Heart right ventricle (tissue), 16 donors: ENCODE measurements at regions of chr19 and their contacts with region 1.

Region 1: DNA sequence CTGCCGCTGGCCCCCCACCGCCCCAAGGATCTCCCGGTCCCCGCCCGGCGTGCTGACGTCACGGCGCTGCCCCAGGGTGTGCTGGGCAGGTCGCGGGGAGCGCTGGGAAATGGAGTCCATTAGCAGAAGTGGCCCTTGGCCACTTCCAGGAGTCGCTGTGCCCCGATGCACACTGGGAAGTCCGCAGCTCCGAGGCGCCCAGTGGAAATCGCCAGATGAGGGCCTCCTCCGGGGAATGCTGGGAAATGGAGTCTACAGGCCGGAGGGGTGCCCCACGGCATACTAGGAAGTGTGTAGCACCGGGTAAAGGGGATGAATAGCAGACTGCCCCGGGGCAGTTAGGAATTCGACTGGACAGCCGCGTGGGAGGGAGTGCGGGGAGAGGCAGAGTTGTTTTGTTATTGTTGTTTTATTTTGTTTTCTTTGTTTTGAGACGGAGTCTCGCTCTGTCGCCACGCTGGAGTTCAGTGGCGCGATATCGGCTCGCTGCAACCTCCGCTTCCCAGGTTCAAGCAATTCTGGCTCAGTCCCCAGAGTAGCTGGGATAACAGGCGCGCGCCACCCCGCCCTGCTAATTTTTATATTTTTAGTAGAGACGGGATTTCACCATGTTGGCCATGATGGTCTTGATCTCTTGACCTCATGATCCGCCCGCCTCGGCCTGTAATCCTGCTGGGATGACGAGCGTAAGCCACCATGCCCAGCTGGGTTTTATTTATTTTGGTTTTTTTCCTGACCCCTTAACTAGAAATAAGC is at the start of gene PPP1R12C:
- DNase-seq: peak; percentile 99
- ATAC-seq: peak; percentile 81 to 91 (median 87)
- H3K4me3 ChIP-seq: peak within 1 kb of the TSS; percentile 69 to 100 (median 89)
- H3K27ac ChIP-seq: peak within 1 kb of the TSS; percentile 86 to 99 (median 96)
- H3K4me1 ChIP-seq: peaks cover 23 to 48% (median 42%) of the 10 kb centered on the region in 9 donors
- H3K27me3 ChIP-seq: no peaks in the 10 kb centered on the region
- CTCF ChIP-seq: peak in 1 of 9 donors; percentile 15
- total RNA-seq, gene PPP1R12C: 134 to 242 (median 193) TPM

Region 2: DNA sequence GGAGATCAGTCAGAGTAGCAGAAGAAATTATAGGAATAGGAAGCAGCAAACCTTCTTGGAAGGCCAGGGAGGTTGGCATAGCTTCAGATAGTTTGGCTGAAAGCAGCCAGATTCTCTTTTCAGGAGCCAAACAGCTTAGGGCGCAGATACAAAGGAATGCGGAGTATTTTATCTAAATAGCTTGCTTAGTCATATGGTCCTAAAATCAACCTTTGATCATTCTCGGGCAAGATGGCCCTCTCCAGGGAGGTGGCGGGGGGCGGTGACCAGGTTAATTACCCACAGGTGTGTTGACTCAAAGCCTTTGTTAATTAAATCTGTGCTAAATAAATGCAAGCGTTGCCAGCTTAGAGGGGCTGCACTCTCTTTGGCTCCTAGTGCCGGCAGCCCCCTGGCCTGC is 224.4 kb before region 1 on chr19:
- intact Hi-C with region 1: no loop called
- DNase-seq: no peak
- ATAC-seq: no peak
- H3K4me3 ChIP-seq: no peak overlapping the region
- H3K27ac ChIP-seq: no peak overlapping the region
- H3K4me1 ChIP-seq: no peaks in the 10 kb centered on the region
- H3K27me3 ChIP-seq: peaks cover 0 to 10% (median 0%) of the 10 kb centered on the region in 7 donors
- CTCF ChIP-seq: no peak

Region 3: GRCh38 chr19:55062734-55063492 is 54.9 kb before region 1 on chr19 and contains the start of gene RDH13:
- intact Hi-C with region 1: loop called in 1 of 10 experiments (anchors 10 kb)
- DNase-seq: peak; percentile 97 to 98
- ATAC-seq: peak; percentile 98 to 100 (median 99)
- H3K4me3 ChIP-seq: peak within 1 kb of the TSS; percentile 64 to 97 (median 93)
- H3K27ac ChIP-seq: peak within 1 kb of the TSS; percentile 57 to 94 (median 91)
- H3K4me1 ChIP-seq: peaks cover 0 to 31% (median 12%) of the 10 kb centered on the region in 9 donors
- H3K27me3 ChIP-seq: peaks cover 0 to 38% (median 0%) of the 10 kb centered on the region in 7 donors
- CTCF ChIP-seq: no peak
- total RNA-seq, gene RDH13: 32.4 to 72.0 (median 54.5) TPM

Region 4: GRCh38 chr19:55088543-55089341 is 29.1 kb before region 1 on chr19:
- intact Hi-C with region 1: loop called in 2 of 10 experiments (anchors 2 kb)
- DNase-seq: peak; percentile 77 to 85
- ATAC-seq: peak in 6 of 8 donors; percentile 12 to 45 (median 30)
- H3K4me3 ChIP-seq: peak overlapping the region in 4 of 10 donors; percentile 56 to 68 (median 62)
- H3K27ac ChIP-seq: peak overlapping the region in 6 of 10 donors; percentile 19 to 66 (median 45)
- H3K4me1 ChIP-seq: peaks cover 8 to 42% (median 28%) of the 10 kb centered on the region in 9 donors
- H3K27me3 ChIP-seq: peaks cover 0 to 48% (median 26%) of the 10 kb centered on the region in 7 donors
- CTCF ChIP-seq: peak; percentile 74 to 93 (median 89)